Motor neuron (in vitro differentiated cells): ENCODE measurements at regions of chr5 and their contacts with region 1.

Region 1: DNA sequence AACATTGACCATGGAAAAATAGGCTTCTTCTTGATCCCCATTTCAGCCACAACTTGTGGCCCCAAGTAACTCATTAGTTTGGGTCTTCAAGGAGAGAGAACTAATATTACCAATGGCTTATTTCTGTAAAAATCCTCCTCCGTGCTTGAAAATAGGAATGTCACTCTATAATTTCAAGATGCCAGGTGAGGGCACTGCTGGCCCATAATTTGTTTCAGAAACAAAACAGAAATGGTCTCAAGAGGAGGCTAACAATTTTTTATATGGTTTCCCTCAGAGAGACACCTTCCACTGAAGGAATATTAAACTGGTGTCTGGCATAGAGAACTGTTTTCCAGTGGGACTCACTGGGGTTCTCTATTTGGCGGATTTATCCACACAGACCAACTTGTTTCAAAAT is 437.0 kb upstream of the TRPC7 start:
- ATAC-seq: peak in 3 of 8 experiments; percentile 28 to 35 (median 32)
- H3K4me3 ChIP-seq: no peak overlapping the region
- H3K27ac ChIP-seq: no peak overlapping the region
- H3K4me1 ChIP-seq: no peaks in the 10 kb centered on the region

Region 2: DNA sequence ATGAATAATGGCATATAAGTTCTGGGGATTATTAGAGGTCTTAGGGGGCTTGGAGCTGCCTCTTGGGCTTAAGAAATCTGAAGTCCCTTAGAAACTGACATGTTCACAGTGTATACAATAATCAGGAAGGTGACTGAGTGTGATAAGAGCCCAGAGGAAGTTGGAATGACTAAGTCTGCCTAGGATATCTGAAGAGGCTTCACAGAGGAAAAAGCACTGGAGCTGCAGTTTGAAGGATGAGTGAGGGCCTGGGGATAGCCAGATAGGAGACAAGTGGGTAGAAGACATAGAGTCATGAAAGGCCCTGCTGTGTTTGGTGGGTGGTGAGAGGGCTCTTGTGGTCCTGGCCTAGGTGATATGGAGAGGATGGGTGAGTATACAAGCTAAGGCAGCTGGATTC is 1275.5 kb before region 1 on chr5:
- in situ Hi-C with region 1: no loop called
- ATAC-seq: no peak
- H3K4me3 ChIP-seq: no peak overlapping the region
- H3K27ac ChIP-seq: no peak overlapping the region
- H3K4me1 ChIP-seq: no peaks in the 10 kb centered on the region

Region 3: GRCh38 chr5:137036640-137037039 is 234.3 kb after region 1 on chr5:
- in situ Hi-C with region 1: loop called in 1 of 9 experiments (anchors 25 kb)
- ATAC-seq: peak in 5 of 8 experiments; percentile 85 to 94 (median 92)
- H3K4me3 ChIP-seq: no peak overlapping the region
- H3K27ac ChIP-seq: peak overlapping the region in 1 of 2 donors; percentile 28
- H3K4me1 ChIP-seq: peaks cover 19 to 26% of the 10 kb centered on the region in 2 donors

Region 4: DNA sequence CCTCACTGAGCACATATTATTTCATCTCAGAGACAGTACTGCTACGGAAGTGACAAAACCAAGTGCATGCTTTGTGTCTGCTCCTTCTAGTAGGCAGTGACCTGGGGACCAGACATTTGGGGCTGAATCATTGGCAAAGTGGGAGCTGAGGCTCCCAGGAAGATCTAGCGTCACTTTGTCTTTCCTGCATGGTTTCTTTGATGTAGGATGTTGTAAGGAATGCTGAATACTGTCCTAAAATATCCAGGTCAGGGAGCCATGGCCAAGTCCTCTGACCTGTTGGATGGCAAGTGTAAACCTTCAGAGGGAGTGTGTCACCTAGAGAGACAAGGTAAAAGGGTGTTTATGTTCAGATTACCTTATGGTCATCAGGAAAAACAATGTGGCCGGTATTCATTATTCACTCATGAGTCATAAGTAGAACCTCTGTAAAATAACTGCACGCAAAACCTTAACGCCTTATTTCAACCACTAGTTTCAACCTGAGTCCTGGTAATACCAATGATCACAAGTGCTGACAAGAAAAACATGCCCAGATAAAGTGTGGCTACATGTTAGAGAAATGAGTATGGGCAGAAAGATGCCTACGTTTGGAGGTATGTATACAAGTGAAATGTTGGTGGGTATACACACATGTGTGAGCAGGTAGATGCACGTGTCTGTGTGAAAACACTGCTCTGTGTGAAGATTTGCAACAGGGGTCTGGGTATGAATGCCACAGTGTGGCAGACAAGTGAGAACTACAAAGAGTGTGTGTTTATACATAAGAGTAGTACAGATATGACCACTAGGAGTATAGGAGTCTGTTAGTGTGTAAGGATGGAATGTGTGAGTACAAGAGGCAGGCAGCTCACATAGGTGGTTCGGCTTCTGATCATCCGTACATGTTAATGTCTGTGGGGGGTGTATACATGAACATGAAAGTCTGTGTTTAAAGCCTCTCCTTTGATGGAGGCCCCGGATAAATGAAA is 432.9 kb after region 1 on chr5:
- in situ Hi-C with region 1: loop called in 1 of 9 experiments (anchors 25 kb)
- ATAC-seq: no peak
- H3K4me3 ChIP-seq: no peak overlapping the region
- H3K27ac ChIP-seq: no peak overlapping the region
- H3K4me1 ChIP-seq: peaks cover 12 to 18% of the 10 kb centered on the region in 2 donors